IMR-90 (cell line): ENCODE measurements at regions of chr1 and their contacts with region 1.

Region 1: GRCh38 chr1:56806804-56807203 is 12.4 kb downstream of the FYB2 start:
- DNase-seq: no peak
- ATAC-seq: no peak
- H3K4me3 ChIP-seq: no peak overlapping the region
- H3K27ac ChIP-seq: no peak overlapping the region
- H3K4me1 ChIP-seq: no peaks in the 10 kb centered on the region
- H3K27me3 ChIP-seq: peaks cover 6% of the 10 kb centered on the region; the same call in 1 of the 2 replicates
- CTCF ChIP-seq: no peak
- POLR2A ChIP-seq: no peak
- RAD21 ChIP-seq: no peak

Region 2: GRCh38 chr1:56644919-56645676 is 161.7 kb before region 1 on chr1 and contains the start of gene PRKAA2:
- CTCF ChIA-PET with region 1: no interaction called
- POLR2A ChIA-PET with region 1: no interaction called
- dilution Hi-C with region 1: no loop called
- in situ Hi-C with region 1: no loop called
- intact Hi-C with region 1: loop called (anchors 5 kb)
- DNase-seq: peak; percentile 12
- ATAC-seq: peak; percentile 88
- H3K4me3 ChIP-seq: peak within 1 kb of the TSS; percentile 92
- H3K27ac ChIP-seq: peak within 1 kb of the TSS; percentile 42
- H3K4me1 ChIP-seq: peaks cover 2% of the 10 kb centered on the region; the same call in 1 of the 2 replicates
- H3K27me3 ChIP-seq: no peaks in the 10 kb centered on the region
- CTCF ChIP-seq: no peak
- POLR2A ChIP-seq: no peak
- RAD21 ChIP-seq: no peak
- total RNA-seq, gene PRKAA2: 1.4 and 2.2 TPM in 2 replicates